Heart left ventricle (tissue), 16 donors: ENCODE measurements at regions of chr7 and their contacts with region 1.

Region 1: GRCh38 chr7:149028346-149029109 is at the start of gene PDIA4:
- DNase-seq: peak; percentile 99 to 100 (median 99)
- ATAC-seq: peak; percentile 97 to 99 (median 98)
- H3K4me3 ChIP-seq: peak within 1 kb of the TSS; percentile 63 to 100 (median 78)
- H3K27ac ChIP-seq: peak within 1 kb of the TSS; percentile 45 to 94 (median 87)
- H3K4me1 ChIP-seq: peaks cover 0 to 31% (median 16%) of the 10 kb centered on the region in 12 donors
- H3K27me3 ChIP-seq: no peaks in the 10 kb centered on the region
- CTCF ChIP-seq: peak in 8 of 12 donors; percentile 6 to 53 (median 26)
- POLR2A ChIP-seq: peak in 1 of 2 donors; percentile 89
- total RNA-seq, gene PDIA4: 20.9 to 67.7 (median 33.1) TPM

Region 2: GRCh38 chr7:148838905-148839304 is 189.6 kb before region 1 on chr7:
- intact Hi-C with region 1: no loop called
- DNase-seq: no peak
- ATAC-seq: no peak
- H3K4me3 ChIP-seq: no peak overlapping the region
- H3K27ac ChIP-seq: no peak overlapping the region
- H3K4me1 ChIP-seq: peaks cover 0 to 6% (median 0%) of the 10 kb centered on the region in 12 donors
- H3K27me3 ChIP-seq: no peaks in the 10 kb centered on the region
- CTCF ChIP-seq: no peak
- POLR2A ChIP-seq: no peak

Region 3: DNA sequence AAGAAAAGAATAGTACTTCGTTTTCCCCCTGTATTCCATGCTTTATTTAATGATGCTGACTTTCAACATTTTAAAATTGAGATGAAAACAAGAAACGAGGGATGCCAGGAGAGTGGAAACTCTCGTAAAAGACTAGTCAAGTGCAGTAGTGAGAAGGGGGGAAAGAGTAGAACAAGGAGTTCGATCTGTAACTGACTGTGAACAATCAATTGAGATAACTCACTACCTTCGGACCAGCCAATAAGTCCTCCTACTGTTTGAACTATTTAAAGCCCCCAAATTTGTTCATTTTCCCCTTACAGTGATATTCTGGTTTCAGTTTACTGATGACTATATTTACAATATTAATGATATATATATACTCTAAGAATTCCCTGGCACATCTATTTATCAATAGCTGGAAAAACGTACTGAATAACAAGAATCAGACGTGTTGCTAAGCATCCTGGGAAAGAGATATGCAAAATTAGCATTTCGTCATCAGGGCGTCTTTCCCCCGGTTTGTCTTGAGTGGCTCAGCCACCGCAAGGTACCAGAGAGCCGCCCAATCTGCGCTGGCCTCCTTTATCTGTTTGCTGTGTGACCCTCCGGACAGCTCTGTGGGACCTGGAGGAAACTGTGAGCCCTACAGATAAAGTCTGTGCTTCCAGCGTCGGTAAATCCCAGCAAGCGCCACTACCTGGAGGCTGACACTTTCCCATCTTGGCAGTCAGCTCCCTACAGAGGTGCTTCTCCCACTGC is 41.3 kb before region 1 on chr7:
- intact Hi-C with region 1: loop called in 3 of 10 experiments (anchors 1 to 5 kb)
- DNase-seq: peak; percentile 77 to 85 (median 81)
- ATAC-seq: peak; percentile 92
- H3K4me3 ChIP-seq: peak overlapping the region; percentile 56 to 84 (median 71)
- H3K27ac ChIP-seq: peak overlapping the region; percentile 53 to 92 (median 77)
- H3K4me1 ChIP-seq: peaks cover 4 to 53% (median 25%) of the 10 kb centered on the region in 12 donors
- H3K27me3 ChIP-seq: no peaks in the 10 kb centered on the region
- CTCF ChIP-seq: no peak
- POLR2A ChIP-seq: peak in 1 of 2 donors; percentile 37

Region 4: DNA sequence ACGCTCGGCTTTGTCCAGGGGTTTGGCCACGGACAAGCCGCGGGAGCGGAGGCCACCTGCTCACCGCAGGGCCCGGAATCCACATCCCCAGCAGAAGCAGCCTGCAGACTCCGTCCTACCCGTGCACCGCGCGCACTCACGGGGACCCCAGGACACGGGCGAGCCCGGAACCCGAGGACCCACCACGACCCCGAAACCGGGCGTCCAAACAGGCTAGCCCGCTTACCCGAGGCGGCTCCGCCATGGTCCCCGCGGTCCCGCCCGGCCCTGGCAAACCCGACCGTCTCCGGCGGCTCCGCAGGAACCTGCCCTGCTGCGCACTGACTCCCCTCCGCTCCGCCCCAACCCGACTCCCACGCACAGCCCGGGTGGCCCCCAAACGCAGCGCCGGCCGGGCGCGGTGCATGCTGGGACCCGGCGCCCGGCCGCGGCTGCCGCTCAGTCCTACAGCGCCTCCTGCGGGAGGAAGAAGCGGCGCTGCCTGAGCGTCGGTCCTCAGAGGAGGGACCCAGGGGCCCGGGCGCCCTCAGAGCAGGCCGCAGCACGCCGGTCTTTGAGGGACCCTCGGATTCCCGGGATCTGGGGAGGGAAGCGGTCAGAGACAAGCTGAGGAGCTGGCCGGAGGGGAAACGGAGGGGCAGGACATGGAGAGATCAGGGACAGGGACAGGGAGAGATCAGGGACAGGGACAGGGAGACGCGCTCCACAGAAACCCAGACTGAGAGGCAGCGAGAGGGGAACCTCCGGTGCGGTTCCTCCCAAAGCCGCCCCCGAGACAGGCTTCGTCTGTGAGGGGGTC is 62.1 kb after region 1 on chr7 and contains the start of gene ZNF786:
- intact Hi-C with region 1: loop called in 3 of 10 experiments (anchors 1 to 5 kb)
- DNase-seq: peak; percentile 91 to 95 (median 92)
- ATAC-seq: peak; percentile 93 to 98 (median 96)
- H3K4me3 ChIP-seq: peak within 1 kb of the TSS; percentile 68 to 99 (median 88)
- H3K27ac ChIP-seq: peak within 1 kb of the TSS; percentile 94 to 100 (median 98)
- H3K4me1 ChIP-seq: peaks cover 0 to 30% (median 11%) of the 10 kb centered on the region in 12 donors
- H3K27me3 ChIP-seq: no peaks in the 10 kb centered on the region
- CTCF ChIP-seq: peak; percentile 82 to 96 (median 95)
- POLR2A ChIP-seq: peak in 1 of 2 donors; percentile 84
- total RNA-seq, gene ZNF786: 2.2 to 5.3 (median 3.0) TPM

Region 5: DNA sequence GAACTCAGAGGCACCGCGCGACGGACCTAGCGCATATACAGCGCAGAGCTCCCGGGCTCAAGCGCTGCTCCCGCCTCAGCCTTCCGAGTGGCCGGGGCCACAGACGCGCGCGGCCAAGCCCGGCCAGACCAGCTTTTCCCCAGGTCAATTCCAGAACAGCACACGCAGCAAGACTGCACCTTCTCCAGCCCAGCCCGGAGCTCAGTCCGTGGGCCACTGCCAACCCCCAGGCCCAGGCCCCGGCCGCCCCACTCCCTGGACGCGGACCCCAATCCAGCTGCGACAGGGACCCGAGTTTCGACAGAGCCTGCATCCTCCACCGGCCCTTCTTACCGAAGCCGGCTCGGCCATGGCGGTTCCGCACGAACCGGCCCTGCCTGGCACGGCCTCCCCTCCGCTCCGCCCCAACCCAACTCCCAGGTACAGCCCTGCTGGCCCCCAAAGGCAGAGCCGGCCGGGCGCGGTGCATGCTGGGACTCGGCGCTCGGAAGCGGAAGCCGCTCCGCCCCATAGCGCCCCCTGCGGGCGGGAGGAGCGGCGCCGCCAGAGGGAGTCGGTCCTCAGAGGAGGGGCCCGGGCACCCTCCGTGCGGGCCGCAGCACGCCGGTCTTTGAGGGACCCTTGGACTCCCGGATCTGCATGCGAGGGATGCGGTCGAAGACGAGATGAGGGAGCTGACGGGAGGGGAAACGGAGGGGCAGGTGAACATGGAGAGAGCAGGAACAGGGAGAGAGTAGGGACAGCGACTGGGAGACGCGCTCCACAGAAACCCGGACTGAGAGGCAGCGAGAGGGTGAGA is 97.5 kb after region 1 on chr7 and contains the start of gene ZNF425:
- intact Hi-C with region 1: loop called in 1 of 10 experiments (anchors 2 kb)
- DNase-seq: peak; percentile 93 to 96 (median 94)
- ATAC-seq: peak; percentile 91 to 96 (median 94)
- H3K4me3 ChIP-seq: peak within 1 kb of the TSS; percentile 70 to 99 (median 84)
- H3K27ac ChIP-seq: peak within 1 kb of the TSS; percentile 94 to 99 (median 96)
- H3K4me1 ChIP-seq: peaks cover 0 to 21% (median 10%) of the 10 kb centered on the region in 12 donors
- H3K27me3 ChIP-seq: no peaks in the 10 kb centered on the region
- CTCF ChIP-seq: peak; percentile 93 to 99 (median 95)
- POLR2A ChIP-seq: peak in 1 of 2 donors; percentile 89
- total RNA-seq, gene ZNF425: 0.21 to 1.6 (median 0.92) TPM